ENCODE measurements at regions of chr13 and their contacts with region 1.

Region 1: GRCh38 chr13:39920613-39921012 is 265.2 kb downstream of the COG6 start:
- DNase-seq: no peak
- H3K4me3 Mint-ChIP-seq: no peak overlapping the region
- H3K27ac Mint-ChIP-seq: no peak overlapping the region
- H3K4me1 Mint-ChIP-seq: no peaks in the 10 kb centered on the region
- H3K27me3 Mint-ChIP-seq: peaks cover 1% of the 10 kb centered on the region

Region 2: DNA sequence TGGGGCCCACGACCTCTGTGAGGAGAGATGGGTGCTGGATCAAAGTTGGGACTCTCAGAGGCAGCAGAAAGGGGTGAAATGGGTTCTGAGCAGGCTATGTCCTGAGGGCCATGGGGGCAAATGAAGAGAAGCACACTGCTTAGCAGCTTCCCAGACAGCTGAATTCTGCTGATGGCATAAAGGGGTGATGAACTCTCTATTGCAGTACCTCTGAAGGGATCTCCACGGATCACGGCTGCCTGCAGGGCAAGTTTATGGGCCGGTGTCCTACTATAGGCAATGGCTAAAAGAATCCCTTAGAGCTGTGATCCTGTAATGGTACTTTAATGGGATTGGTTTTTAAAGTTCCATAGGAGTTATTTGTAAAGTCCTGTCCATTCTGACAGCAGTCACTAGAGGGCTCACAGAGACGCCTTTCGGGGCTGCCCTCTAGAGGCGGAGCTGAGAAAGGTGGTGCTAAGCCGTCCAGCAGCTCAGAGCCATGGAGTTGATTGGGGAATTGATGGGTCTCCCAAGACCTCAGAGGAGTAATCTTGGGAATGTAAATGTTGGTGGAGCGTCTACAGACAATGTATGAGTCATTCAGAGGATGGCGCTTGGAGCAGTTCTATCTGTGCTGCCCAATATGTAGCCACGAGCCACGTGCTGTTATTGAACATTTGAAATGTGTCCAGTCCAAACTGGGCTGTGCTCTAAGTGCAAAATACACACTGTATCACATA is 22.1 kb after region 1 on chr13:
- CTCF ChIA-PET with region 1: interaction called, 10 read pairs
- POLR2A ChIA-PET with region 1: no interaction called
- DNase-seq: peak; percentile 76
- H3K4me3 Mint-ChIP-seq: no peak overlapping the region
- H3K27ac Mint-ChIP-seq: no peak overlapping the region
- H3K4me1 Mint-ChIP-seq: peaks cover 3% of the 10 kb centered on the region
- H3K27me3 Mint-ChIP-seq: peaks cover 1% of the 10 kb centered on the region

Region 3: DNA sequence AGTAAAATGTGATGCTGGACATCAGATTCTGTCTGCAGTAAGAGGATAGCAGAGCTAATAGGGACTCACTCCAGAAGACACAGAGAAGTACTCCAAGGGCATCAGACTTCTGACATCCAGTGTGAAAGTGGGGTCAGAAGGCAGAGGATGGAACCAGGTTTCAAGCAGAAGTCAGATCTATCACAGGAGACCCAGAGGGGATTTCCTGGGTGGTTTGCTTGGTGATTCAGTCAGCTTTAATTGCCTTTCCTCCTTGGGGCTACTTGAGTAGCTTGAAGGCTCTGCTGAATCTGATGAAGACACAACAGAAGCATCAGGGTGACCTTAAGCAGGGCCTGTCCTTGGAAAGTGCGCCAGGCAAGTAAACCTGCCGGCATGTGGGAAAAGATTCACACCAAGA is 35.4 kb after region 1 on chr13:
- CTCF ChIA-PET with region 1: no interaction called
- POLR2A ChIA-PET with region 1: no interaction called
- DNase-seq: peak; percentile 11
- H3K4me3 Mint-ChIP-seq: no peak overlapping the region
- H3K27ac Mint-ChIP-seq: no peak overlapping the region
- H3K4me1 Mint-ChIP-seq: peaks cover 59% of the 10 kb centered on the region
- H3K27me3 Mint-ChIP-seq: no peaks in the 10 kb centered on the region